ENCODE measurements at regions of chr3 and their contacts with region 1.

Region 1: DNA sequence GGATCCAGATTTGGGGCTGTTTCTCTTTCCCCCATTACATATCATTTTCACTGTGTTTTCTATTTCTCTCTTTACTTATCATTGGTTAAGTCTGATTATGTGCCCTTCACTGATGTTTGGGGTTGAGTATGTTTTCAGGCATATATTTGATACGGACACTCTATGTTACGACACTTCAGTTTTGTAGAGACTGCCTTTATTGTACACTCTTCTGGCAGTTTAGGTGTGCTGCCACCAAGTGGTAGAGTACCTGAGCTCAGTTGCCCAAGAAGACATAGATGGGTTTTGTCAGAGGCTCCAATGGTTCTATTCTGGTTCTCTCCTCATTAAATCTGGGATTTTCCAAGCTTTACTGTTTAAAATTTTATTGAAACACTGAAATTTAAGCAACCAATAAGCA is 255.0 kb upstream of the ROPN1 start:
- DNase-seq: peak; percentile 32
- CTCF ChIP-seq: peak; percentile 53

Region 2: GRCh38 chr3:124149771-124150170 is 97.2 kb before region 1 on chr3:
- CTCF ChIA-PET with region 1: no interaction called
- POLR2A ChIA-PET with region 1: no interaction called
- DNase-seq: no peak
- CTCF ChIP-seq: no peak

Region 3: GRCh38 chr3:124269619-124270018 is 22.7 kb after region 1 on chr3:
- CTCF ChIA-PET with region 1: interaction called, 11 read pairs
- POLR2A ChIA-PET with region 1: no interaction called
- DNase-seq: no peak
- CTCF ChIP-seq: no peak

Region 4: DNA sequence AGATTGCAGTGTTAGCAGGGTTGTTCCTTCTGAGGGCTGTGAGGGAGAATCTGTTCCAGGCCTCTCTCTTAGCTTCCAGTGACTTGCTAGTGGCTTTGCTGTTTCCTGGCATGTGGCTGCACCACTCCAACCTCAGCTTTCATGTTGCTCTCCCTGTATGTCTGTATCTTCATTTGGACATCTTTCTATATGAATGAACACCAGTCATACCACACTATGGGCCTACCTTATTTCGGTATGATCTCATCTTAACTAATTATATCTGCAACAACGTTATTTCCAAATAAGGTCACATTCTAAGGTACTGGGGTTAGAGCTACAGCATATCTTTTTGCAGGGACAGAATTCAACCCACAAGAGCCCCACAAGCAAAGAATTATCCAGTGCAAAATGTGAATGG is 126.6 kb after region 1 on chr3:
- CTCF ChIA-PET with region 1: no interaction called
- POLR2A ChIA-PET with region 1: no interaction called
- DNase-seq: peak; percentile 32
- CTCF ChIP-seq: no peak

Measured in GM10248 (cell line).